HEK293 (cell line): ENCODE measurements at regions of chr11 and their contacts with region 1.

Region 1: GRCh38 chr11:57311109-57311936 is 13.4 kb downstream of the TNKS1BP1 start:
- H3K4me3 ChIP-seq: peak overlapping the region; percentile 43
- H3K27ac ChIP-seq: no peak overlapping the region
- H3K4me1 ChIP-seq: no peaks in the 10 kb centered on the region
- CTCF ChIP-seq: no peak

Region 2: GRCh38 chr11:57324886-57325734 is 13.8 kb after region 1 on chr11 and contains the start of gene TNKS1BP1:
- CTCF ChIA-PET with region 1: interaction called, 7 read pairs
- POLR2A ChIA-PET with region 1: interaction called, 95 read pairs
- H3K4me3 ChIP-seq: peak within 1 kb of the TSS; percentile 68
- H3K27ac ChIP-seq: peak within 1 kb of the TSS; percentile 70
- H3K4me1 ChIP-seq: peaks cover 7% of the 10 kb centered on the region
- CTCF ChIP-seq: peak; percentile 44